CD4-positive, alpha-beta memory T cell (primary cell): ENCODE measurements at regions of chr7 and their contacts with region 1.

Region 1: GRCh38 chr7:44921607-44922359 is 36.5 kb upstream of the PURB start:
- DNase-seq: peak; percentile 83 to 91 (median 86)
- H3K4me3 ChIP-seq: no peak overlapping the region
- H3K4me3 Mint-ChIP-seq: no peak overlapping the region
- H3K27ac ChIP-seq: no peak overlapping the region
- H3K27ac Mint-ChIP-seq: peak overlapping the region in 5 of 7 donors; percentile 37 to 90 (median 81)
- H3K4me1 ChIP-seq: peaks cover 4% of the 10 kb centered on the region
- H3K4me1 Mint-ChIP-seq: peaks cover 0 to 10% (median 7%) of the 10 kb centered on the region in 4 donors
- H3K27me3 ChIP-seq: no peaks in the 10 kb centered on the region
- H3K27me3 Mint-ChIP-seq: peaks cover 0 to 2% of the 10 kb centered on the region in 2 donors

Region 2: GRCh38 chr7:44587843-44588711 is 333.7 kb before region 1 on chr7:
- CTCF ChIA-PET with region 1: interaction called, 6 read pairs
- POLR2A ChIA-PET with region 1: no interaction called
- intact Hi-C with region 1: loop called (anchors 1 kb)
- DNase-seq: peak; percentile 65 to 73 (median 71)
- H3K4me3 ChIP-seq: no peak overlapping the region
- H3K4me3 Mint-ChIP-seq: no peak overlapping the region
- H3K27ac ChIP-seq: no peak overlapping the region
- H3K27ac Mint-ChIP-seq: peak overlapping the region in 5 of 7 donors; percentile 42 to 86 (median 68)
- H3K4me1 ChIP-seq: peaks cover 2% of the 10 kb centered on the region
- H3K4me1 Mint-ChIP-seq: peaks cover 5 to 16% (median 9%) of the 10 kb centered on the region in 4 donors
- H3K27me3 ChIP-seq: no peaks in the 10 kb centered on the region
- H3K27me3 Mint-ChIP-seq: no peaks in the 10 kb centered on the region

Region 3: GRCh38 chr7:44858161-44858560 is 63.6 kb before region 1 on chr7:
- CTCF ChIA-PET with region 1: interaction called, 160 read pairs
- POLR2A ChIA-PET with region 1: interaction called, 3 read pairs
- intact Hi-C with region 1: loop called (anchors 1 kb)
- DNase-seq: no peak
- H3K4me3 ChIP-seq: no peak overlapping the region
- H3K4me3 Mint-ChIP-seq: no peak overlapping the region
- H3K27ac ChIP-seq: no peak overlapping the region
- H3K27ac Mint-ChIP-seq: peak overlapping the region in 1 of 7 donors; percentile 24
- H3K4me1 ChIP-seq: peaks cover 5% of the 10 kb centered on the region
- H3K4me1 Mint-ChIP-seq: peaks cover 3 to 6% (median 4%) of the 10 kb centered on the region in 4 donors
- H3K27me3 ChIP-seq: no peaks in the 10 kb centered on the region
- H3K27me3 Mint-ChIP-seq: peaks cover 0 to 7% of the 10 kb centered on the region in 2 donors